Activated CD4-positive, alpha-beta T cell treated with anti-CD3 and anti-CD28 coated beads for 36 hours (primary cell): ENCODE measurements at regions of chr17 and their contacts with region 1.

Region 1: GRCh38 chr17:57833179-57833939 is 16.5 kb downstream of the MRPS23 start:
- DNase-seq: peak; percentile 84
- ATAC-seq: peak; percentile 86
- H3K4me3 Mint-ChIP-seq: no peak overlapping the region
- H3K27ac Mint-ChIP-seq: no peak overlapping the region
- H3K4me1 Mint-ChIP-seq: peaks cover 7% of the 10 kb centered on the region
- H3K27me3 Mint-ChIP-seq: no peaks in the 10 kb centered on the region

Region 2: GRCh38 chr17:57125406-57125805 is 708.0 kb before region 1 on chr17:
- CTCF ChIA-PET with region 1: interaction called, 13 read pairs
- POLR2A ChIA-PET with region 1: no interaction called
- intact Hi-C with region 1: loop called in 1 of 2 experiments (anchors 5 kb)
- DNase-seq: no peak
- ATAC-seq: no peak
- H3K4me3 Mint-ChIP-seq: no peak overlapping the region
- H3K27ac Mint-ChIP-seq: no peak overlapping the region
- H3K4me1 Mint-ChIP-seq: no peaks in the 10 kb centered on the region
- H3K27me3 Mint-ChIP-seq: no peaks in the 10 kb centered on the region

Region 3: DNA sequence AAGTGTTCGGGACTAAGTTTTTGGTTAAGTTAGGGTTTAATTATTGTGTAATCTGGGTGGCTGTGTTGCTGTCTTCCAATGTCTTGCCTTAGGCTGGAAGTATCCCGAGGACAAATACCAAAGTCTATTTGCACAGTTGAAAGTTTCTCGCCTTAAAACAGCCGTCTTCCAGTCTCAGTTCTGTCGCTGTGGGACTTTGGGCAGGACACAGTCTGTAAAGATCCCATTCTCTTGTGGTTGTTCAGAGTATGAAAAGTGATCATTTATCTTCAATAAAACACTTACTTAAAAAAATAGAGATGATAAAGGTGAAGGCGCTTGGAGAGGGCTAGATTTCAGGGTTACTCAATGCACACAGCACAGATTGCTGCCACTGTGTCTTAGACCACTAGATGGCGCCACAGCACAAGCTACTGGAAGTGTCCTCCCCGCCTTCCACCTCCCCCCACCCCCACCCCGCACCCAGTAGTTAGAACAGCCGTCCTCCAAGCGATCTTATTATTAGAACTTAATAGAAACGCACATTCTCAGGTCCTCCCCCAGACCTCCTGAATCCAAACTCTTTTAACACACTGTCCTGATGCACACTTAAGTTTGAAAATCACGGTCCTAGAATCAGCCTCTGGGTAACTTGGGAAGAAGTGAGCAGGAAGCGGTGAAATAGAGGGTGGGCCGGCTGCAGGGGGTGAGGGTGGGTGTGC is 702.4 kb before region 1 on chr17:
- CTCF ChIA-PET with region 1: interaction called, 13 read pairs
- POLR2A ChIA-PET with region 1: no interaction called
- intact Hi-C with region 1: loop called (anchors 1 to 5 kb)
- DNase-seq: peak; percentile 91
- ATAC-seq: peak; percentile 84
- H3K4me3 Mint-ChIP-seq: no peak overlapping the region
- H3K27ac Mint-ChIP-seq: no peak overlapping the region
- H3K4me1 Mint-ChIP-seq: peaks cover 5% of the 10 kb centered on the region
- H3K27me3 Mint-ChIP-seq: no peaks in the 10 kb centered on the region

Region 4: GRCh38 chr17:57678393-57678792 is 155.0 kb before region 1 on chr17:
- CTCF ChIA-PET with region 1: no interaction called
- POLR2A ChIA-PET with region 1: no interaction called
- intact Hi-C with region 1: no loop called
- DNase-seq: no peak
- ATAC-seq: no peak
- H3K4me3 Mint-ChIP-seq: no peak overlapping the region
- H3K27ac Mint-ChIP-seq: no peak overlapping the region
- H3K4me1 Mint-ChIP-seq: no peaks in the 10 kb centered on the region
- H3K27me3 Mint-ChIP-seq: no peaks in the 10 kb centered on the region

Region 5: GRCh38 chr17:57810721-57811637 is 22.4 kb before region 1 on chr17:
- CTCF ChIA-PET with region 1: interaction called, 21 read pairs
- POLR2A ChIA-PET with region 1: no interaction called
- intact Hi-C with region 1: no loop called
- DNase-seq: no peak
- ATAC-seq: no peak
- H3K4me3 Mint-ChIP-seq: no peak overlapping the region
- H3K27ac Mint-ChIP-seq: no peak overlapping the region
- H3K4me1 Mint-ChIP-seq: peaks cover 8% of the 10 kb centered on the region
- H3K27me3 Mint-ChIP-seq: peaks cover 50% of the 10 kb centered on the region

Region 6: GRCh38 chr17:57818066-57818465 is 15.3 kb before region 1 on chr17:
- CTCF ChIA-PET with region 1: interaction called, 21 read pairs
- POLR2A ChIA-PET with region 1: no interaction called
- intact Hi-C with region 1: no loop called
- DNase-seq: no peak
- ATAC-seq: no peak
- H3K4me3 Mint-ChIP-seq: no peak overlapping the region
- H3K27ac Mint-ChIP-seq: no peak overlapping the region
- H3K4me1 Mint-ChIP-seq: no peaks in the 10 kb centered on the region
- H3K27me3 Mint-ChIP-seq: peaks cover 9% of the 10 kb centered on the region